Natural killer cell (primary cell): ENCODE measurements at regions of chr5 and their contacts with region 1.

Region 1: GRCh38 chr5:76473661-76474060 is 70.6 kb downstream of the IQGAP2 start:
- DNase-seq: peak; percentile 51 to 87
- ATAC-seq: peak; percentile 91 to 98 (median 96)
- H3K4me3 ChIP-seq: no peak overlapping the region
- H3K4me3 Mint-ChIP-seq: peak overlapping the region; percentile 90
- H3K27ac ChIP-seq: peak overlapping the region; percentile 76
- H3K27ac Mint-ChIP-seq: peak overlapping the region; percentile 96 to 99
- H3K4me1 ChIP-seq: peaks cover 47% of the 10 kb centered on the region
- H3K4me1 Mint-ChIP-seq: peaks cover 76 to 80% of the 10 kb centered on the region in 2 donors
- H3K27me3 ChIP-seq: no peaks in the 10 kb centered on the region
- H3K27me3 Mint-ChIP-seq: no peaks in the 10 kb centered on the region
- CTCF ChIP-seq: no peak

Region 2: DNA sequence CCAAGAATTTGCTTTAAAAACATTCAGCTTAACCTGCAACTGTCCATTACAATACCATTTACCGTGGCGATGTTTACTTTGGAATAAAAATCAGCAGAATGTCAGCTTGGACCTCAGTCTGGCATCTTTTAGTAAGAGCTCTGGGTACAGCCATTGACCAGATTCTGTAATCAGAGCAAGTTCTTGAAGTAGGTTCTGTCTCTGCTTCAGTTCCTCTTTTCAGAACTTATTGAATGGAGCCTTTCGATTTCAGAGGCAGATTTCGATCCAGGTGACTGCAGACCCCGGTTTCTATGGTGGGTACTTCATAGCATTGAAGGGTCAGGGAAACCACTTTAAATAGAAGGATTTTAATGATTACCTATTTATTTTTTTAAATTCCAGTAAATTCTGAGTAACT is 443.9 kb before region 1 on chr5:
- intact Hi-C with region 1: no loop called
- DNase-seq: no peak
- ATAC-seq: no peak
- H3K4me3 ChIP-seq: no peak overlapping the region
- H3K4me3 Mint-ChIP-seq: no peak overlapping the region
- H3K27ac ChIP-seq: no peak overlapping the region
- H3K27ac Mint-ChIP-seq: no peak overlapping the region
- H3K4me1 ChIP-seq: no peaks in the 10 kb centered on the region
- H3K4me1 Mint-ChIP-seq: no peaks in the 10 kb centered on the region
- H3K27me3 ChIP-seq: peaks cover 4% of the 10 kb centered on the region
- H3K27me3 Mint-ChIP-seq: peaks cover 5 to 32% of the 10 kb centered on the region in 2 donors
- CTCF ChIP-seq: no peak

Region 3: GRCh38 chr5:76439201-76439600 is 34.5 kb before region 1 on chr5:
- intact Hi-C with region 1: loop called (anchors 5 kb)
- DNase-seq: no peak
- ATAC-seq: no peak
- H3K4me3 ChIP-seq: no peak overlapping the region
- H3K4me3 Mint-ChIP-seq: no peak overlapping the region
- H3K27ac ChIP-seq: no peak overlapping the region
- H3K27ac Mint-ChIP-seq: peak overlapping the region; percentile 73 to 79
- H3K4me1 ChIP-seq: peaks cover 5% of the 10 kb centered on the region
- H3K4me1 Mint-ChIP-seq: peaks cover 76 to 79% of the 10 kb centered on the region in 2 donors
- H3K27me3 ChIP-seq: no peaks in the 10 kb centered on the region
- H3K27me3 Mint-ChIP-seq: no peaks in the 10 kb centered on the region
- CTCF ChIP-seq: no peak

Region 4: GRCh38 chr5:76521240-76521758 is 47.6 kb after region 1 on chr5:
- intact Hi-C with region 1: loop called (anchors 5 kb)
- DNase-seq: peak in 1 of 2 donors; percentile 36
- ATAC-seq: peak; percentile 73 to 83 (median 79)
- H3K4me3 ChIP-seq: no peak overlapping the region
- H3K4me3 Mint-ChIP-seq: peak overlapping the region; percentile 43
- H3K27ac ChIP-seq: peak overlapping the region; percentile 58
- H3K27ac Mint-ChIP-seq: peak overlapping the region; percentile 92 to 95
- H3K4me1 ChIP-seq: peaks cover 16% of the 10 kb centered on the region
- H3K4me1 Mint-ChIP-seq: peaks cover 70 to 71% of the 10 kb centered on the region in 2 donors
- H3K27me3 ChIP-seq: no peaks in the 10 kb centered on the region
- H3K27me3 Mint-ChIP-seq: no peaks in the 10 kb centered on the region
- CTCF ChIP-seq: no peak

Region 5: DNA sequence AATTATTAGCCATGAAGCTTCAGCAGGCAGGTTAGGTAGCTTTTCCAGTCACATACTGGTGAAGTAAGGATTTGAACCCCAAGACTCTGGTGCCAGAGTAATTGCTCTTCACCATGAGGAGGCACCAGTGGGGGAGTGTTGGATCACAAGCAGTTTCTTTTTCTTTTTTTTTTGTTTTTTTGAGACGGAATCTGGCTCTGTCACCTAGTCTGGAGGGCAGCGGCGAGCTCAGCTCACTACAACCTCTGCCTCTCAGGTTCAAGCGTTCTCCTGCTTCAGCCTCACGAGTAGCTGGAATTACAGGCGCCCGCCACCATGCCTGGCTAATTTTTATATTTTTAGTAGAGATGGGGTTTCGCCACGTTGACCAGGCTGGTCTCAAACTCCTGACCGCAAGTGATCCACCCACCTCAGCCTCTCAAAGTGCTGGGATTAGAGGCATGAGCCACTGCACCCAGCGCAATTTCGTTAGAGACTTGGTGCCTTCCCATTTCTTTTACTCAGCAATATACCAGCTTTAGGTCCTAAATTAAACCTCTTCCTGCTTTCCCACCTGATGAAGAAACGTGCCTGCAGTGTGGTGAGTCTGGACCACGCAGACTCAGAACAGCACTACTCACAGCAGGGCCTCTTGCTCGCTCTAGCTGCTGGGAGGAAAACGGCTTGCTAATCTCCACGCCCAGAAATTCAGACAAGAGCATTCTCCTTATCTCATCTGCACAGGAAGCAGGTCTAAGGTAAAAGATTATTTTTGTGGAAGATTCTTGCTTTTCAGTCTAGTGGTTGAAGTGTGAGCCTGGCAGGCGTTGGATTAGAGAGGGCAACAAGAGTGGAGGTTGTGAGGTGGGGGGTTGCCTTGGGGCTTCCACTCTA is 376.0 kb after region 1 on chr5 and contains the start of gene S100Z:
- intact Hi-C with region 1: no loop called
- DNase-seq: peak in 1 of 2 donors; percentile 58
- ATAC-seq: peak; percentile 44 to 61 (median 50)
- H3K4me3 ChIP-seq: no peak within 1 kb of the TSS
- H3K4me3 Mint-ChIP-seq: peak within 1 kb of the TSS; percentile 64
- H3K27ac ChIP-seq: no peak within 1 kb of the TSS
- H3K27ac Mint-ChIP-seq: peak within 1 kb of the TSS in 1 of 2 donors; percentile 63
- H3K4me1 ChIP-seq: peaks cover 27% of the 10 kb centered on the region
- H3K4me1 Mint-ChIP-seq: peaks cover 16 to 28% of the 10 kb centered on the region in 2 donors
- H3K27me3 ChIP-seq: no peaks in the 10 kb centered on the region
- H3K27me3 Mint-ChIP-seq: no peaks in the 10 kb centered on the region
- CTCF ChIP-seq: no peak
- total RNA-seq, gene S100Z: 0.60 to 3.3 (median 0.91) TPM